CD4-positive, alpha-beta memory T cell (primary cell): ENCODE measurements at regions of chr2 and their contacts with region 1.

Region 1: GRCh38 chr2:160994141-160995002 is 165.9 kb upstream of the TANK start:
- DNase-seq: peak; percentile 77 to 81 (median 80)
- H3K4me3 ChIP-seq: no peak overlapping the region
- H3K4me3 Mint-ChIP-seq: peak overlapping the region in 7 of 8 donors; percentile 19 to 72 (median 64)
- H3K27ac ChIP-seq: no peak overlapping the region
- H3K27ac Mint-ChIP-seq: peak overlapping the region in 4 of 7 donors; percentile 1 to 78 (median 64)
- H3K4me1 ChIP-seq: peaks cover 5% of the 10 kb centered on the region
- H3K4me1 Mint-ChIP-seq: peaks cover 8 to 10% (median 9%) of the 10 kb centered on the region in 4 donors
- H3K27me3 ChIP-seq: no peaks in the 10 kb centered on the region
- H3K27me3 Mint-ChIP-seq: no peaks in the 10 kb centered on the region

Region 2: DNA sequence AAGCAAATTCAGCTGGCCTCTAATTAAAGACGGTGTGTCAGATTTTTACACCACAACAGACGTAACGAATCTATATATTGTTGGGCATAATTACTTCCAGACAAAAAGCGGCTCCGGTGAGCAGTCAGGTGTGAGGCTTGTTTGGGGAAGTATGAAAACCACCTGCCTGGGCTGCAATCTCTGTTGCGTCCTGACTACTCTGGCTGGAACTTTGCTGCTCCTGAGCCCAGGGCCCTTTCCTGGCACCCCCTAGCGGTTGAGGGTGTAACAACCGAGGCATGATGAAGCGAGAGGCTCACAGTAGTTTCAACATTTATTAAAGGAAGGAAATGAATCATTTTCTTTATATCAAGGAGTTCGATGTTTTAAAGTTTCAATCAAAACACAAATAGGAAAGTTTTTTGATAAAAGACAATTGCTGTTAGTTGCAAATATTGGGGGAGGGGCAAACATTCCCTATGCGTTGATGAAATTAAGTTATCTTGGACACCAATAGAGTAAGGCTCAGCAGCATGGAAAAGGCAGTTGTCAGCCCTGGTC is 783.7 kb before region 1 on chr2:
- CTCF ChIA-PET with region 1: interaction called, 13 read pairs
- POLR2A ChIA-PET with region 1: no interaction called
- intact Hi-C with region 1: no loop called
- DNase-seq: peak; percentile 41 to 61 (median 55)
- H3K4me3 ChIP-seq: no peak overlapping the region
- H3K4me3 Mint-ChIP-seq: no peak overlapping the region
- H3K27ac ChIP-seq: no peak overlapping the region
- H3K27ac Mint-ChIP-seq: peak overlapping the region in 1 of 7 donors; percentile 71
- H3K4me1 ChIP-seq: no peaks in the 10 kb centered on the region
- H3K4me1 Mint-ChIP-seq: peaks cover 7 to 15% (median 13%) of the 10 kb centered on the region in 4 donors
- H3K27me3 ChIP-seq: no peaks in the 10 kb centered on the region
- H3K27me3 Mint-ChIP-seq: peaks cover 4 to 10% of the 10 kb centered on the region in 2 donors

Region 3: GRCh38 chr2:160269803-160270570 is 724.4 kb before region 1 on chr2:
- CTCF ChIA-PET with region 1: interaction called, 7 read pairs
- POLR2A ChIA-PET with region 1: no interaction called
- intact Hi-C with region 1: loop called (anchors 5 kb)
- DNase-seq: peak; percentile 64 to 75 (median 69)
- H3K4me3 ChIP-seq: peak overlapping the region; percentile 30 to 59
- H3K4me3 Mint-ChIP-seq: peak overlapping the region; percentile 81 to 90 (median 87)
- H3K27ac ChIP-seq: peak overlapping the region; percentile 64
- H3K27ac Mint-ChIP-seq: peak overlapping the region; percentile 91 to 97 (median 94)
- H3K4me1 ChIP-seq: peaks cover 29% of the 10 kb centered on the region
- H3K4me1 Mint-ChIP-seq: peaks cover 20 to 48% (median 32%) of the 10 kb centered on the region in 4 donors
- H3K27me3 ChIP-seq: no peaks in the 10 kb centered on the region
- H3K27me3 Mint-ChIP-seq: no peaks in the 10 kb centered on the region

Region 4: GRCh38 chr2:160353166-160353565 is 641.2 kb before region 1 on chr2:
- CTCF ChIA-PET with region 1: interaction called, 38 read pairs
- POLR2A ChIA-PET with region 1: no interaction called
- intact Hi-C with region 1: loop called (anchors 1 kb)
- DNase-seq: peak in 4 of 5 donors; percentile 26 to 37 (median 32)
- H3K4me3 ChIP-seq: no peak overlapping the region
- H3K4me3 Mint-ChIP-seq: peak overlapping the region in 2 of 8 donors; percentile 4 to 45
- H3K27ac ChIP-seq: no peak overlapping the region
- H3K27ac Mint-ChIP-seq: peak overlapping the region in 2 of 7 donors; percentile 44 to 67
- H3K4me1 ChIP-seq: peaks cover 27% of the 10 kb centered on the region
- H3K4me1 Mint-ChIP-seq: peaks cover 50 to 87% (median 73%) of the 10 kb centered on the region in 4 donors
- H3K27me3 ChIP-seq: no peaks in the 10 kb centered on the region
- H3K27me3 Mint-ChIP-seq: no peaks in the 10 kb centered on the region

Region 5: GRCh38 chr2:160970052-160970965 is 24.1 kb before region 1 on chr2:
- CTCF ChIA-PET with region 1: interaction called, 22 read pairs
- POLR2A ChIA-PET with region 1: no interaction called
- intact Hi-C with region 1: no loop called
- DNase-seq: peak in 4 of 5 donors; percentile 15 to 26 (median 20)
- H3K4me3 ChIP-seq: no peak overlapping the region
- H3K4me3 Mint-ChIP-seq: peak overlapping the region in 1 of 8 donors; percentile 26
- H3K27ac ChIP-seq: no peak overlapping the region
- H3K27ac Mint-ChIP-seq: peak overlapping the region in 2 of 7 donors; percentile 7 to 10
- H3K4me1 ChIP-seq: no peaks in the 10 kb centered on the region
- H3K4me1 Mint-ChIP-seq: peaks cover 1 to 4% (median 3%) of the 10 kb centered on the region in 4 donors
- H3K27me3 ChIP-seq: no peaks in the 10 kb centered on the region
- H3K27me3 Mint-ChIP-seq: peaks cover 0 to 1% of the 10 kb centered on the region in 2 donors

Region 6: DNA sequence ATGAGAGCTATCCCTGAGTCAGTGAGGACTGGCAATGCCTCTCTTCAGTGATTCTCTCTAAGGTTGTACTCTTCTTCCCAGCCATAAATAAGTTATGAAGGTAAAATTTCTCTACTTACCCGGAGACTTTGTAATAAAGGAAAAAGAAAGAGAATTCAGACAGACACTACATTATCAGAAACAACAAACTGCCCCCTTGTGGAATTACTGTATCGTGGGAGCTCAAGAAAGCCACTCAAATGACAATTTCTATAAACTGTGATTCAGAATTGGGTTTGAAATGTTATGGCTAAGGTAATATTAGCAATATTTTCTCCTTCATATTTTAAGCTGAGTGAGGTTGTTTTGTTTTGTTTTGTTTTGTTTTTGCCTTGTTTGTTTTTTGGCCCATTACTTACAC is 10.0 kb after region 1 on chr2:
- CTCF ChIA-PET with region 1: interaction called, 12 read pairs
- POLR2A ChIA-PET with region 1: no interaction called
- intact Hi-C with region 1: no loop called
- DNase-seq: no peak
- H3K4me3 ChIP-seq: no peak overlapping the region
- H3K4me3 Mint-ChIP-seq: no peak overlapping the region
- H3K27ac ChIP-seq: no peak overlapping the region
- H3K27ac Mint-ChIP-seq: no peak overlapping the region
- H3K4me1 ChIP-seq: no peaks in the 10 kb centered on the region
- H3K4me1 Mint-ChIP-seq: no peaks in the 10 kb centered on the region
- H3K27me3 ChIP-seq: no peaks in the 10 kb centered on the region
- H3K27me3 Mint-ChIP-seq: peaks cover 6 to 19% of the 10 kb centered on the region in 2 donors